ENCODE measurements at regions of chr16 and their contacts with region 1.

Region 1: DNA sequence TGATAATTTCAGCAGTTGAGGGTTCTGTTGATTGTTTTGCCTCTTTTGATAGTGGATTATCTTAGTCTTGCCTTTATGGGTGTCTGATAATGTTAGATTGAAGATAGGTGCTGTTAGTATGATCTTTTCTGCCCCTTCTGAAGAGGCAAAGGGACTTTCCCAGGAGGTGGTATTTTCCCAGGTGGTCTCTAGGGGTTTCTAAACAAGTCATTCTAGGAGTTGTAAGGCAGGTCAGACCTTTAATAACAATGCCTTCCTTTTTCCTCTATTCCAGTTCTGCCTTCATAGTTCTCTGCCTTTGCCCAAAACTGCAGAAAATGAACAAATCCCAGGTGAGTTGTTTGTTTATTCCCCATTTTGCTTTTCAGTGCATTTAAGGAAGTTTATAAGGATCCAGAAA is 4.3 kb downstream of the ZFP1 start:
- DNase-seq: no peak
- H3K4me3 ChIP-seq: no peak overlapping the region
- H3K27ac ChIP-seq: no peak overlapping the region
- H3K4me1 ChIP-seq: no peaks in the 10 kb centered on the region
- H3K27me3 ChIP-seq: no peaks in the 10 kb centered on the region
- CTCF ChIP-seq: no peak
- POLR2A ChIP-seq: no peak

Region 2: GRCh38 chr16:75392911-75393310 is 240.3 kb after region 1 on chr16:
- intact Hi-C with region 1: loop called (anchors 5 kb)
- DNase-seq: no peak
- H3K4me3 ChIP-seq: no peak overlapping the region
- H3K27ac ChIP-seq: no peak overlapping the region
- H3K4me1 ChIP-seq: no peaks in the 10 kb centered on the region
- H3K27me3 ChIP-seq: no peaks in the 10 kb centered on the region
- CTCF ChIP-seq: no peak
- POLR2A ChIP-seq: no peak